Calu3 (cell line): ENCODE measurements at regions of chr5 and their contacts with region 1.

Region 1: GRCh38 chr5:64566310-64566916 is 60.6 kb downstream of the RGS7BP start:
- DNase-seq: no peak
- H3K4me3 Mint-ChIP-seq: no peak overlapping the region
- H3K27ac Mint-ChIP-seq: no peak overlapping the region
- H3K4me1 Mint-ChIP-seq: no peaks in the 10 kb centered on the region
- H3K27me3 Mint-ChIP-seq: no peaks in the 10 kb centered on the region
- CTCF ChIP-seq: no peak

Region 2: GRCh38 chr5:64532212-64532611 is 34.2 kb before region 1 on chr5:
- CTCF ChIA-PET with region 1: no interaction called
- intact Hi-C with region 1: loop called (anchors 5 kb)
- DNase-seq: no peak
- H3K4me3 Mint-ChIP-seq: no peak overlapping the region
- H3K27ac Mint-ChIP-seq: no peak overlapping the region
- H3K4me1 Mint-ChIP-seq: no peaks in the 10 kb centered on the region
- H3K27me3 Mint-ChIP-seq: no peaks in the 10 kb centered on the region
- CTCF ChIP-seq: no peak